T-cell (primary cell): ENCODE measurements at regions of chr11 and their contacts with region 1.

Region 1: DNA sequence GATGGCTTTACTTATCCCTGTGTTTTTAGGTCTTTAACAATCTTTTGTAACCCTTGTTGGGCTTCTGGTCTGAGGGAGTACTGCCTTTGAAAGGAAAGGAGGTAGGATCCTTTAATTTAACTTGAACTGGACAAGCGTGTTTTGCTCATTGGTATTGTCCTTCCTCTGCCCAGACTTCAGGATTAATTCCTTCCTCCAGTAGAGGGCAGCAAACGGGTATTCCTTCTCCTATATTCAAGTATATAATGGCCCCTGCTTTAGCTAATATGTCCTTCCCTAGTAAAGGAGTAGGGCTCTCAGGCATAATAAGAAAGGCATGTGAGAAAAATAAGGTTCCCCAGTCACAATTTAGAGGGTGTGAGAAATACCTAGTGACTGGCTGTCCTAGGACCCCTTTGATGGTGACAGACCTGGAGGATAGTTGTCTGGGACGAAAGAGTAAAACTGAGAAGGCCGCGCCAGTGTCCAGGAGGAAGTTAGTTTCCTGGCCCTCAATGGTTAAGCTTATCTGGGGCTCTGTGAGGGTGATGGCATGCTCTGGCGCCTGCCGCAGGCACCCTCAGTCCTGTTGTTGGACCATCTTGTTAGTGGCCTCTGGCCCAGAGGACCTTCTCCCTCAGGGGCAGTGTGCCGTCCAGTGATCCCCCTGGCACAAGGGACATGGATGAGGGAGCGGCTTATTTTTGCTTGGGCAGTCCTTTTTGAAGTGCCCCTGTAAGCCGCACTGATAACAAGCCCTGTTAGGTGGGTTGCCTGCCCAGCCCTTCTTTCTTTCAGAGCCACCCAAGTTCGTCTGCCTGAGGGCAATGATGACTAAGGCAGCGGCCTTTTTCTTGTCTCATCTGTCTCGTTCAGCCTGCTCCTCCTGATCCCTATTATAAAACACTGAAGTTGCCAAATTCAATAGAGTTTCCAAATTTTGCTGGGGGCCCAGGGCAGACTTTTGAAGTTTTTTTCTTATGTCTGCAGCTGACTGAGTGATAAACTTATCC is 51.8 kb downstream of the C11orf71 start:
- DNase-seq: peak in 11 of 35 experiments; percentile 9 to 70 (median 25)
- ATAC-seq: peak in 1 of 4 experiments; percentile 58
- H3K4me3 ChIP-seq: no peak overlapping the region
- H3K4me3 Mint-ChIP-seq: no peak overlapping the region
- H3K27ac ChIP-seq: no peak overlapping the region
- H3K27ac Mint-ChIP-seq: no peak overlapping the region
- H3K4me1 ChIP-seq: peaks cover 0 to 3% of the 10 kb centered on the region in 2 experiments
- H3K4me1 Mint-ChIP-seq: peaks cover 0 to 9% (median 6%) of the 10 kb centered on the region in 3 donors
- H3K27me3 ChIP-seq: no peaks in the 10 kb centered on the region
- H3K27me3 Mint-ChIP-seq: no peaks in the 10 kb centered on the region

Region 2: DNA sequence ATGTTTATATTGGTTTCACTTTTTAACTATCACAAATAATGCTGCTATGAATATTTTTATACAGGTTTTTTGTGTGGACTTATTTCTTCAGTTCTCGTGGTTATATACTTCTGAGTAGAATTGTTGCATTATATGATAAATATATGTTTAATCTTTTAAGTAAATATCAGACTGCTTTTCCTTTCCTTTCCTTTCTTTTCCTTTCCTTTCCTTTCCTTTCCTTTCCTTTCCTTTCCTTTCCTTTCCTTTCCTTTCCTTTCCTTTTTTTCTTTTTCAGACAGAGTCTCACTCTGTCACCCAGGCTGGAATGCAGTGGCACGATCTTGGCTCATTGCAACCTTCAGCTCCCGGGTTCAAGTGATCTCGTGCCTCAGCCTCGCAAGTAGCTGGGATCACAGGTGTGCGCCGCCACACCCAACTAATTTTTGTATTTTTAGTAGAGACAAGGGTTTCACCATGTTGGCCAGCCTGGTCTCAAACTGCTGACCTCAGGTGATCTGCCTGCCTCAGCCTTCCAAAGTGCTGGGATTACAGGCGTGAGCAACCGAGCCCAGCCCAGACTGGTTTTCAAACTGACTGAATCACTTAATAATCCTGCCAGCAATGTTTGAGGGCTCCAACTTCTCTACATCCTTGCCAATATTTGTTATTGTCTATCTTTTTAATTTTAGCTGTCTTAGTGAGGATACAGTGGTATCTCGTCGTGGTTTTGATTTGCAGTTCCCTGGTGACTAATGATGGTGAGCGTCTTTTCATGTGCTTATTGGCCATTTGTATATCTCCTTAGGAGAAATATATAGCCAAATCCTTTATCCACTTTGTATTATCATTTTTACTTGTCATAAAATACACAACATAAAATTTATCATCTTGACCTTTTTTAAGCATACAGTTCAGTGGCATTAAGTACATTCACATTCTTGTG is 422.0 kb before region 1 on chr11:
- CTCF ChIA-PET with region 1: no interaction called
- POLR2A ChIA-PET with region 1: interaction called in 1 of 2 experiments, 11 read pairs
- DNase-seq: no peak
- ATAC-seq: no peak
- H3K4me3 ChIP-seq: no peak overlapping the region
- H3K4me3 Mint-ChIP-seq: no peak overlapping the region
- H3K27ac ChIP-seq: no peak overlapping the region
- H3K27ac Mint-ChIP-seq: no peak overlapping the region
- H3K4me1 ChIP-seq: no peaks in the 10 kb centered on the region
- H3K4me1 Mint-ChIP-seq: no peaks in the 10 kb centered on the region
- H3K27me3 ChIP-seq: peaks cover 0 to 10% of the 10 kb centered on the region in 2 experiments
- H3K27me3 Mint-ChIP-seq: peaks cover 18 to 22% of the 10 kb centered on the region in 2 donors

Region 3: GRCh38 chr11:114091516-114092397 is 256.7 kb before region 1 on chr11:
- CTCF ChIA-PET with region 1: no interaction called
- POLR2A ChIA-PET with region 1: no interaction called
- DNase-seq: no peak
- ATAC-seq: no peak
- H3K4me3 ChIP-seq: no peak overlapping the region
- H3K4me3 Mint-ChIP-seq: no peak overlapping the region
- H3K27ac ChIP-seq: no peak overlapping the region
- H3K27ac Mint-ChIP-seq: no peak overlapping the region
- H3K4me1 ChIP-seq: peaks cover 0 to 3% of the 10 kb centered on the region in 2 experiments
- H3K4me1 Mint-ChIP-seq: peaks cover 13 to 33% (median 14%) of the 10 kb centered on the region in 3 donors
- H3K27me3 ChIP-seq: no peaks in the 10 kb centered on the region
- H3K27me3 Mint-ChIP-seq: no peaks in the 10 kb centered on the region

Region 4: DNA sequence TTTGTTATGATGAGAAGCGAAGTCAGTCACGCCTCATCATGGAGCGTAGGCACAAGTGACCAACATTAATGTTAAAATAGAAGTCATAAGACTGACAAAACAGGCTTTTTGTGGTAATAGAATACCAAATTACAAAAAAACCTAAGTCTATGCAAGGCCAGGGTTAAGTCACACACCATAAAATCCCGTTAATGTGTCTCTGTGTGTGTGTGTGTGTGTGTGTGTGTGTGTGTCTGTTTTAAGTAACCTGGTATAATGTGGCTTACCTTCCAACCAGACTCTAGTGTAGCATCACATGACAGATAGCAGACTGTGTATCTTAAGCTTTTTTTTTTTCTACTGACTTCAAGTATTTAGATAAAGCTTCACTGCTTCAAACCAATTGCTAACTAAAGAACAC is 13.8 kb after region 1 on chr11:
- CTCF ChIA-PET with region 1: no interaction called
- POLR2A ChIA-PET with region 1: no interaction called
- DNase-seq: no peak
- ATAC-seq: no peak
- H3K4me3 ChIP-seq: no peak overlapping the region
- H3K4me3 Mint-ChIP-seq: no peak overlapping the region
- H3K27ac ChIP-seq: no peak overlapping the region
- H3K27ac Mint-ChIP-seq: no peak overlapping the region
- H3K4me1 ChIP-seq: no peaks in the 10 kb centered on the region
- H3K4me1 Mint-ChIP-seq: no peaks in the 10 kb centered on the region
- H3K27me3 ChIP-seq: peaks cover 0 to 8% of the 10 kb centered on the region in 2 experiments
- H3K27me3 Mint-ChIP-seq: peaks cover 14 to 38% of the 10 kb centered on the region in 2 donors

Region 5: GRCh38 chr11:114412946-114413345 is 64.5 kb after region 1 on chr11:
- CTCF ChIA-PET with region 1: no interaction called
- POLR2A ChIA-PET with region 1: no interaction called
- DNase-seq: no peak
- ATAC-seq: no peak
- H3K4me3 ChIP-seq: no peak overlapping the region
- H3K4me3 Mint-ChIP-seq: no peak overlapping the region
- H3K27ac ChIP-seq: no peak overlapping the region
- H3K27ac Mint-ChIP-seq: no peak overlapping the region
- H3K4me1 ChIP-seq: no peaks in the 10 kb centered on the region
- H3K4me1 Mint-ChIP-seq: no peaks in the 10 kb centered on the region
- H3K27me3 ChIP-seq: no peaks in the 10 kb centered on the region
- H3K27me3 Mint-ChIP-seq: no peaks in the 10 kb centered on the region